Activated CD8-positive, alpha-beta memory T cell treated with anti-CD3 and anti-CD28 coated beads, Interleukin-2, amount 10 ng/mL, durations not matched to agents 7 days and 5 days (primary cell): ENCODE measurements at regions of chr1 and their contacts with region 1.

Region 1: GRCh38 chr1:37434292-37434907 is 40.0 kb upstream of the ZC3H12A start:
- DNase-seq: peak; percentile 78
- ATAC-seq: peak; percentile 90
- H3K4me3 Mint-ChIP-seq: no peak overlapping the region
- H3K27ac Mint-ChIP-seq: no peak overlapping the region
- H3K4me1 Mint-ChIP-seq: no peaks in the 10 kb centered on the region
- H3K27me3 Mint-ChIP-seq: peaks cover 7% of the 10 kb centered on the region

Region 2: GRCh38 chr1:36576118-36576517 is 858.3 kb before region 1 on chr1:
- CTCF ChIA-PET with region 1: interaction called, 11 read pairs
- DNase-seq: peak; percentile 55
- ATAC-seq: peak; percentile 71
- H3K4me3 Mint-ChIP-seq: no peak overlapping the region
- H3K27ac Mint-ChIP-seq: no peak overlapping the region
- H3K4me1 Mint-ChIP-seq: no peaks in the 10 kb centered on the region
- H3K27me3 Mint-ChIP-seq: peaks cover 27% of the 10 kb centered on the region